Aorta (tissue), 5 donors: ENCODE measurements at regions of chr22 and their contacts with region 1.

Region 1: DNA sequence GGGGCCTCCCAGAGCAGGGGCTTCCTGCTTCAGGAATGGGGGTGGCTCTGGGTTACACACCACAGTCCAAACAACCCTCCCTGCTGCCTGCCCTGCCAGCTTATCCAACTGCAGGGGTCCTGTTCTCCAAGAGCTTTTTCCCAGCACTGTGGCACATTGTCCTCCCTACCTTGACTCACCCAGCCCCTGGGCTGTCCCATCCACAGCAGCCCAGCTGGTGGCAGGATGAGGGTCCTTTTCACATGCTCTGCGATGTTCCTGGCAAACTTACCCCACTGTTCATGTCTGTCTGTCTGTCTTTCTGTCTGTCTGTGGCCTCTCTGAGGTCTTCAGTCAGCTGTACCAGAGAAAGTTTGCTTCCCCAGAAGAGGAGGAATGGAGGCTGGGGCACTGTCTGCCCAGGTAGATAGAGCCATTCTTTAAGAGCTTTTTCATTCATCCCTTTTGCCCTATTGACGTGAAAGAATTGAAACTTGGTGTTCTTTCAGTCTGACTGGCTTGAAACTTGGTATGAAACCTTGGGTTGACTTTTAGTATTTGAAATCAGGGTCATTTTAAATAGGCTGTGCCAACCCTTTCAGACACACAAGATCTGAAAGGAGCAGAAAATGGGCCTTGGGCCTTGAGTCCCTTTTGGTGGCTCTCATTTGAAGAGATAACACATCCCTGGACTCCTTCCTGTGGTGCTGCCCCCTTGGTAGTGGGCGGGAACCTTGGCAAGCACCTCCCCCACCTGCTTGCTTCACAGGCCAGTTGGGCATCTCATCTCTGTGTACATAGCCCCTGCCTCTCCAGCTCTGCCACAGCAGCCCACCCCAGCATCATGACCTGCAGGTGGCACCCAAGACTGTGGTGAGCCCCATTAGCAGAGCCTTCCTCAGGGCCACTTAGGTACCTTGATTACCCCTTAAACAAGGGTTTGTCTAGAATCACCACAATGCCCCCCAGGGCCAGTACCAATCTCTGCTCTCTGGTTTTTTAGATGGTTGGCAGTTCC is 74.6 kb upstream of the SUSD2 start:
- DNase-seq: peak in 1 of 2 donors; percentile 46
- ATAC-seq: peak; percentile 49
- H3K4me3 ChIP-seq: no peak overlapping the region
- H3K27ac ChIP-seq: peak overlapping the region in 1 of 2 donors; percentile 73
- H3K4me1 ChIP-seq: peaks cover 0 to 8% of the 10 kb centered on the region in 2 donors
- H3K27me3 ChIP-seq: no peaks in the 10 kb centered on the region

Region 2: GRCh38 chr22:23938328-23939016 is 168.2 kb before region 1 on chr22:
- intact Hi-C with region 1: no loop called
- DNase-seq: no peak
- ATAC-seq: no peak
- H3K4me3 ChIP-seq: no peak overlapping the region
- H3K27ac ChIP-seq: no peak overlapping the region
- H3K4me1 ChIP-seq: no peaks in the 10 kb centered on the region
- H3K27me3 ChIP-seq: no peaks in the 10 kb centered on the region

Region 3: GRCh38 chr22:24146194-24146616 is 39.5 kb after region 1 on chr22:
- intact Hi-C with region 1: loop called in 1 of 2 experiments (anchors 5 kb)
- DNase-seq: peak in 1 of 2 donors; percentile 66
- ATAC-seq: peak; percentile 76
- H3K4me3 ChIP-seq: no peak overlapping the region
- H3K27ac ChIP-seq: peak overlapping the region; percentile 51 to 96
- H3K4me1 ChIP-seq: peaks cover 5 to 11% of the 10 kb centered on the region in 2 donors
- H3K27me3 ChIP-seq: no peaks in the 10 kb centered on the region

Region 4: GRCh38 chr22:24156913-24157821 is 50.5 kb after region 1 on chr22:
- intact Hi-C with region 1: loop called in 1 of 2 experiments (anchors 5 kb)
- DNase-seq: peak; percentile 91
- ATAC-seq: peak; percentile 86
- H3K4me3 ChIP-seq: peak overlapping the region; percentile 69 to 91
- H3K27ac ChIP-seq: peak overlapping the region in 1 of 2 donors; percentile 25
- H3K4me1 ChIP-seq: no peaks in the 10 kb centered on the region
- H3K27me3 ChIP-seq: no peaks in the 10 kb centered on the region

Region 5: GRCh38 chr22:24175160-24175808 is 68.6 kb after region 1 on chr22:
- intact Hi-C with region 1: loop called (anchors 2 to 5 kb)
- DNase-seq: peak; percentile 92 to 95
- ATAC-seq: peak; percentile 81
- H3K4me3 ChIP-seq: no peak overlapping the region
- H3K27ac ChIP-seq: peak overlapping the region in 1 of 2 donors; percentile 74
- H3K4me1 ChIP-seq: no peaks in the 10 kb centered on the region
- H3K27me3 ChIP-seq: no peaks in the 10 kb centered on the region